SK-N-SH (cell line): ENCODE measurements at regions of chr22 and their contacts with region 1.

Region 1: GRCh38 chr22:39170825-39171622 is 18.5 kb upstream of the CBX7 start:
- DNase-seq: peak; percentile 79
- H3K4me3 ChIP-seq: peak overlapping the region in 1 of 2 experiments; percentile 57; a peak in 1 of 4 replicates
- H3K27ac ChIP-seq: no peak overlapping the region; a peak in 1 of 4 replicates
- H3K4me1 ChIP-seq: peaks cover 4 to 9% of the 10 kb centered on the region in 2 experiments; a peak in 2 of 4 replicates
- H3K27me3 ChIP-seq: no peaks in the 10 kb centered on the region
- CTCF ChIP-seq: peak; percentile 71
- EP300 ChIP-seq: no peak
- RAD21 ChIP-seq: peak; percentile 81

Region 2: GRCh38 chr22:39028281-39028680 is 142.7 kb before region 1 on chr22:
- CTCF ChIA-PET with region 1: no interaction called
- POLR2A ChIA-PET with region 1: no interaction called
- DNase-seq: no peak
- H3K4me3 ChIP-seq: no peak overlapping the region
- H3K27ac ChIP-seq: no peak overlapping the region
- H3K4me1 ChIP-seq: no peaks in the 10 kb centered on the region
- H3K27me3 ChIP-seq: no peaks in the 10 kb centered on the region
- CTCF ChIP-seq: no peak
- EP300 ChIP-seq: no peak
- RAD21 ChIP-seq: no peak

Region 3: DNA sequence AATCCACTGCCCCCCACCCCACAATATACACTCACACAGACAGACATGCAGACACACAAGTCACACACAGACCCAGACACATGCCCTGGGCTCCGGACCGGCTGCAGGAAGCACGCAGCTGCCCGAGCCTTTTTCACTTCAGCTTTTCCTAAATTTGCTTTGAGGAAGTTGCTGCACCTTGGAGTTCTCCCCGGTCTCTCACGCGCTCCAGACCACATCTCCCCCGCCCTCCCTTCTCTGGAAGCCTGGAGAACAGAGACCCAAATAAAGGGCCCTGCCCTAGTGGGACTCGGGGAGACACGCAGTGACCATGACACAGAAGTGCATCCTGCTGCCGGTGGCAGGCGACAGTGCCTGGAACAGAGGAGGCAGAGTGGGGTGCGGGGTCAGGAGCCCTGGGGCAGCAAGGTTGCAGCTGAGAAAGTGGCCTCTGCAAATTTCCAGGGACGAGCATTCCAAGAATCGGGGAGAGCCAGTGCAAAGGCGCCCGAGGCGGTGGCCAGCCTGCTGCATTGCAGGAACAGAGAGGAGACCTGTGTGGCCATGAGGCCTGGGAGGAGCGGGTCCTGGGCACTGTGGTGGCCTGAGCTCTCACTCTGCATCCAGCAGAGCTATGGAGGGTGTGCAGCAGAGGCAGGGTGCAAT is 129.3 kb after region 1 on chr22:
- CTCF ChIA-PET with region 1: interaction called, 14 read pairs
- POLR2A ChIA-PET with region 1: no interaction called
- DNase-seq: no peak
- H3K4me3 ChIP-seq: no peak overlapping the region
- H3K27ac ChIP-seq: no peak overlapping the region
- H3K4me1 ChIP-seq: peaks cover 0 to 3% of the 10 kb centered on the region in 2 experiments; a peak in 1 of 4 replicates
- H3K27me3 ChIP-seq: no peaks in the 10 kb centered on the region
- CTCF ChIP-seq: no peak
- EP300 ChIP-seq: no peak
- RAD21 ChIP-seq: no peak

Region 4: GRCh38 chr22:39308614-39309363 is 137.8 kb after region 1 on chr22:
- CTCF ChIA-PET with region 1: interaction called, 35 read pairs
- POLR2A ChIA-PET with region 1: no interaction called
- DNase-seq: no peak
- H3K4me3 ChIP-seq: no peak overlapping the region
- H3K27ac ChIP-seq: peak overlapping the region in 1 of 2 experiments; percentile 72; a peak in 3 of 4 replicates
- H3K4me1 ChIP-seq: no peaks in the 10 kb centered on the region; a peak in 2 of 4 replicates
- H3K27me3 ChIP-seq: no peaks in the 10 kb centered on the region
- CTCF ChIP-seq: peak; percentile 31
- EP300 ChIP-seq: peak in 1 of 2 experiments; percentile 47; a peak in 1 of 4 replicates
- RAD21 ChIP-seq: no peak